Heart left ventricle (tissue), 16 donors: ENCODE measurements at regions of chr4 and their contacts with region 1.

Region 1: GRCh38 chr4:47567511-47567910 is 82.4 kb downstream of the ATP10D start:
- DNase-seq: no peak
- ATAC-seq: no peak
- H3K4me3 ChIP-seq: no peak overlapping the region
- H3K27ac ChIP-seq: no peak overlapping the region
- H3K4me1 ChIP-seq: peaks cover 0 to 3% (median 0%) of the 10 kb centered on the region in 12 donors
- H3K27me3 ChIP-seq: no peaks in the 10 kb centered on the region
- CTCF ChIP-seq: no peak
- POLR2A ChIP-seq: no peak

Region 2: DNA sequence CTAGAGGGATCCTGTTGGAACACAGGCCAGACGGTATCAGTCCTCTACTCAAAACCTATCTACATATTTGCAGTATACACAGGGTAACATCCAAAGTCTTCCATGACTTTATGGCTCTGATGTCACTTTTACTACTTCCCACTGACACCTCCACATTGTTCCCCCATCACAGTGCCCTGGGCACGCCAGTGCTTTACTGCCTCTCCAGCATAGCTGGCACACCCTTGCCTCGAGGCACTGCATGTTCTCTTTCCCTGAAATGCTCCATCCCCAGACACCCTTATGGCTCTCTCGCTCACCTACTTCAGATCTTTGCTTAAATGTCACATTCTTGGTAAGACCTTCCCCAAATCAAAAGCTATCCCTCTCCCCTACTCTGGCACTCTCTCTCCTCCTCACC is 88.7 kb before region 1 on chr4:
- intact Hi-C with region 1: loop called in 2 of 10 experiments (anchors 5 to 10 kb)
- DNase-seq: no peak
- ATAC-seq: no peak
- H3K4me3 ChIP-seq: no peak overlapping the region
- H3K27ac ChIP-seq: no peak overlapping the region
- H3K4me1 ChIP-seq: peaks cover 0 to 13% (median 0%) of the 10 kb centered on the region in 12 donors
- H3K27me3 ChIP-seq: no peaks in the 10 kb centered on the region
- CTCF ChIP-seq: no peak
- POLR2A ChIP-seq: no peak

Region 3: DNA sequence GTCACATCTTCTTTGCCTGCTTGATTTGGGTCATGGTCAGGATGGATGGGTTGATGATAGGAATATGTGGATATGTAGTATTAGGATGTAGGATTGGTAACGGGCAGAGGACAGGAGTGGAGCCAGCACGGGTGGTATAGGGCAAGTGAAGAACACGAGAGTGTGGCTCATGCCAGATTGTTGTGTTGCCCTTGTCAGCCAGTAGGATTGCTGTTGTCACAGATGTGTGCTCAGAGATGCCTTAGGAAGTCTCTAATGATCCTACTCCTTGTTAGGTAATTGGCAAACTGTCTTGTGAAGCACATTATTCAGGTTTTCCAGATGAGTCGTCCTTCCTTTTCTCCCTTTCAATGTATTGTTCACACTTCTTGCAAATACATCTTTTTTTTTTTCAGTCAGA is 77.0 kb before region 1 on chr4:
- intact Hi-C with region 1: loop called in 5 of 10 experiments (anchors 2 to 10 kb)
- DNase-seq: peak in 3 of 5 donors; percentile 22 to 39 (median 31)
- ATAC-seq: peak in 3 of 4 donors; percentile 80 to 90 (median 83)
- H3K4me3 ChIP-seq: no peak overlapping the region
- H3K27ac ChIP-seq: no peak overlapping the region
- H3K4me1 ChIP-seq: peaks cover 0 to 42% (median 25%) of the 10 kb centered on the region in 12 donors
- H3K27me3 ChIP-seq: no peaks in the 10 kb centered on the region
- CTCF ChIP-seq: peak; percentile 16 to 65 (median 39)
- POLR2A ChIP-seq: no peak